GM10248 (cell line): ENCODE measurements at regions of chr20 and their contacts with region 1.

Region 1: GRCh38 chr20:38893565-38894090 is 32.6 kb upstream of the FAM83D start:
- DNase-seq: peak; percentile 89
- CTCF ChIP-seq: peak; percentile 99

Region 2: GRCh38 chr20:38764567-38765355 is 128.9 kb before region 1 on chr20:
- CTCF ChIA-PET with region 1: interaction called, 10 read pairs
- POLR2A ChIA-PET with region 1: no interaction called
- DNase-seq: no peak
- CTCF ChIP-seq: no peak

Region 3: DNA sequence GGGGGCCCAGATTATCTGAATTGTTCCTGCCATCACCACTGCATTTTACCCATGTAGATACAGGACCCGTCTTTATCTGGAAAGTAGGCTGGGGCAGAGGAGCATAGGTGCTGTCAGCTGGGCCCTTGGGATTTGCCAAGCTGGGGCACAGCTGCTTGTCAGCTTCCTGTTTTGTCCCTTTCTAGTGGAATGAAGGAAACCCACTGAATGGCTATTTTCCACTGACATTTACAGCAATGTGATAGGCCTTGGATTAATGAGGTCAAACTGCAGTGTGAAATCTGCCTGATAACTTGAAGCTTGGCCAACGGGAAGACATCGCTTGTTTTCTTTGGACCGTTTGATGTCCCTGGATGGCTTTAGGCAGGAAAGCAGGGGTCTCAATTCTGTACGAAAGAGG is 81.4 kb before region 1 on chr20:
- CTCF ChIA-PET with region 1: interaction called, 26 read pairs
- POLR2A ChIA-PET with region 1: interaction called, 6 read pairs
- DNase-seq: no peak
- CTCF ChIP-seq: no peak

Region 4: GRCh38 chr20:38842558-38842981 is 51.1 kb before region 1 on chr20:
- CTCF ChIA-PET with region 1: interaction called, 14 read pairs
- POLR2A ChIA-PET with region 1: interaction called, 12 read pairs
- DNase-seq: peak; percentile 88
- CTCF ChIP-seq: no peak

Region 5: DNA sequence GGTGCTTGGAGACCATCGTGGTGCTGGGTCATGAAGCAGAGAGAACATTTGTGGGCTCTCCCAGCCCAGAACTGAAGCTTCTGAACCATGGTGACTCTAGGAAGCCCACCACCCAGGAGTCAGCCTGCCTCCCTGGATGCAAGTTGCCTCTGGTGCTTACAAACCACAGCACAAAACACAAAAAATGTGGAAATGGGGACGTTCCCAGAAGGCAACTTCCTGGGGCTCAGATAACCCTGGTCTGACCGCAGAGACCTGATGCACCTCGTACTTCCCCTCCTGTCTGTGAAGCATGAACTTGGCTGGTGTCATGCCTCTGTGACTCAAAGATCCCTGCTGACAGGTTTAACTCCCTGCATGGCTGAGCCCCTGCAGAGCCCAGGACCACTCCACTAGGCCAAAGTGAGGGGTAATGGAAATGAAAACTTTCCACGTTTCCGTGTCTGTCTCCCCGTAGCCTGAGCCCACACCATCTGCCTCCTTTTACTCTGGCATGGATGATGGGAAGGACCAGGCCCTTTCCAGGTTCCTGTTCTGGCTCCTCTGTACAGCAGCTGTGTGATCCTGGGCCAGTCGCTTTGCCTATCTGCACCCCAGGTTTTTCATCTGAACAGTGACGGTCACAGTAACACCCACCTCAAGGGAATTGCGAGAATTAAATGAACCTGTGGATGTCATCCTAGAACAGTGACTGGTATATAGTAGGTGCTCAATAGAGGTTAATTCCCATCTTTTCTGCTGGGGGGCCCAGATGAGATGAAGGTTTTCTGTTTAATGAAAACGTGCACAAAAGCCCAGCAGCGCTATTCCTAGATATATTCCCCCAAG is 30.4 kb before region 1 on chr20:
- CTCF ChIA-PET with region 1: interaction called, 66 read pairs
- POLR2A ChIA-PET with region 1: no interaction called
- DNase-seq: peak; percentile 72
- CTCF ChIP-seq: no peak

Region 6: GRCh38 chr20:38883081-38883980 is 10.3 kb before region 1 on chr20:
- CTCF ChIA-PET with region 1: interaction called, 112 read pairs
- POLR2A ChIA-PET with region 1: interaction called, 6 read pairs
- DNase-seq: no peak
- CTCF ChIP-seq: no peak